Activated naive CD4-positive, alpha-beta T cell treated with anti-CD3 and anti-CD28 coated beads for 36 hours (primary cell): ENCODE measurements at regions of chrX and their contacts with region 1.

Region 1: GRCh38 chrX:124086411-124086810 is 124.9 kb downstream of the STAG2 start:
- DNase-seq: peak; percentile 58
- H3K4me3 Mint-ChIP-seq: no peak overlapping the region
- H3K27ac Mint-ChIP-seq: peak overlapping the region; percentile 83
- H3K4me1 Mint-ChIP-seq: peaks cover 28% of the 10 kb centered on the region
- H3K27me3 Mint-ChIP-seq: no peaks in the 10 kb centered on the region

Region 2: GRCh38 chrX:123878252-123878721 is 208.1 kb before region 1 on chrX:
- CTCF ChIA-PET with region 1: no interaction called
- intact Hi-C with region 1: loop called (anchors 5 kb)
- DNase-seq: no peak
- H3K4me3 Mint-ChIP-seq: no peak overlapping the region
- H3K27ac Mint-ChIP-seq: no peak overlapping the region
- H3K4me1 Mint-ChIP-seq: peaks cover 34% of the 10 kb centered on the region
- H3K27me3 Mint-ChIP-seq: no peaks in the 10 kb centered on the region

Region 3: DNA sequence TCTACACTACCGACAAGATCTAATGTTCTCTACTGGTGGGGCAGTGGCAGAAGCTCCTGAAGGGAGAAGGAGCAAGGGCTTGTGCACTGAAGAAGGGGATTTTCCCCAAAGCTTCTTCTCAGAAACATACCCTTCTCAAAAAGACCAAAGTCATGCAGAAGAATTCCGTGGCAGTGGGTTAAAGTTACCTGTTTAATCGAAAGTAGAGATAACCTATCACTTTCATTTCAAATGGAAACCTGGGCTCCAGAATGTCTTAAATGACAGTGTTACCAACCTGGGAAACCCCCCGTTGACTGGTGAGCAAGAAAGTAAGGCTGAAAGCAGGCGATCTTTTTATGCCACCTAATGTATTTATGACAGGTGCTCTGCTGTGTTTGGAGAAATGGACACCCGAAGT is 153.5 kb after region 1 on chrX:
- CTCF ChIA-PET with region 1: no interaction called
- intact Hi-C with region 1: loop called (anchors 1 kb)
- DNase-seq: peak; percentile 72
- H3K4me3 Mint-ChIP-seq: peak overlapping the region; percentile 15
- H3K27ac Mint-ChIP-seq: peak overlapping the region; percentile 42
- H3K4me1 Mint-ChIP-seq: peaks cover 40% of the 10 kb centered on the region
- H3K27me3 Mint-ChIP-seq: no peaks in the 10 kb centered on the region

Region 4: DNA sequence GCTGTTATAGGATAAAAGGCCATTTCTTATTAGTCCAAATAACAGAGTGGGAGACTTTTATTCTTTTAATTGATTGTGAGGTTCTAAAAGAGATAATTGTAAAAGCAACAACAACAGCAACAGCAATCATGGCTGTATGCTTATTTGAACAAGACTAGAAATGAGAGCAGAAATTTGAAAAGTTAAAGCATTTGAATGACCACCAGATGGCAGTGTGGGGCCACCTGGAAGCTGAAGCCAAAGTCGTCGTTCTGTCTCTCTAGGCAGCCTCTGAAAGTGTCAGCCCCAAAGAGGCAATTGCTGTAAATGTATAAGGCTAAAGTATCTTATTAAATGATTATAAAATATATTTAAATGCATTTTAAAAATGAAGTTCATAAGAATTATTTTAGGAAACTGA is 302.2 kb after region 1 on chrX:
- CTCF ChIA-PET with region 1: no interaction called
- intact Hi-C with region 1: loop called (anchors 5 kb)
- DNase-seq: peak; percentile 75
- H3K4me3 Mint-ChIP-seq: no peak overlapping the region
- H3K27ac Mint-ChIP-seq: no peak overlapping the region
- H3K4me1 Mint-ChIP-seq: peaks cover 13% of the 10 kb centered on the region
- H3K27me3 Mint-ChIP-seq: no peaks in the 10 kb centered on the region

Region 5: GRCh38 chrX:124540474-124540873 is 454.1 kb after region 1 on chrX:
- CTCF ChIA-PET with region 1: no interaction called
- intact Hi-C with region 1: no loop called
- DNase-seq: no peak
- H3K4me3 Mint-ChIP-seq: no peak overlapping the region
- H3K27ac Mint-ChIP-seq: no peak overlapping the region
- H3K4me1 Mint-ChIP-seq: no peaks in the 10 kb centered on the region
- H3K27me3 Mint-ChIP-seq: no peaks in the 10 kb centered on the region